ENCODE measurements at regions of chr11 and their contacts with region 1.

Region 1: GRCh38 chr11:33857933-33858371 is 33.9 kb downstream of the LMO2 start:
- DNase-seq: peak; percentile 81
- H3K4me3 Mint-ChIP-seq: no peak overlapping the region
- H3K27ac Mint-ChIP-seq: no peak overlapping the region
- H3K4me1 Mint-ChIP-seq: no peaks in the 10 kb centered on the region
- H3K27me3 Mint-ChIP-seq: peaks cover 37% of the 10 kb centered on the region

Region 2: DNA sequence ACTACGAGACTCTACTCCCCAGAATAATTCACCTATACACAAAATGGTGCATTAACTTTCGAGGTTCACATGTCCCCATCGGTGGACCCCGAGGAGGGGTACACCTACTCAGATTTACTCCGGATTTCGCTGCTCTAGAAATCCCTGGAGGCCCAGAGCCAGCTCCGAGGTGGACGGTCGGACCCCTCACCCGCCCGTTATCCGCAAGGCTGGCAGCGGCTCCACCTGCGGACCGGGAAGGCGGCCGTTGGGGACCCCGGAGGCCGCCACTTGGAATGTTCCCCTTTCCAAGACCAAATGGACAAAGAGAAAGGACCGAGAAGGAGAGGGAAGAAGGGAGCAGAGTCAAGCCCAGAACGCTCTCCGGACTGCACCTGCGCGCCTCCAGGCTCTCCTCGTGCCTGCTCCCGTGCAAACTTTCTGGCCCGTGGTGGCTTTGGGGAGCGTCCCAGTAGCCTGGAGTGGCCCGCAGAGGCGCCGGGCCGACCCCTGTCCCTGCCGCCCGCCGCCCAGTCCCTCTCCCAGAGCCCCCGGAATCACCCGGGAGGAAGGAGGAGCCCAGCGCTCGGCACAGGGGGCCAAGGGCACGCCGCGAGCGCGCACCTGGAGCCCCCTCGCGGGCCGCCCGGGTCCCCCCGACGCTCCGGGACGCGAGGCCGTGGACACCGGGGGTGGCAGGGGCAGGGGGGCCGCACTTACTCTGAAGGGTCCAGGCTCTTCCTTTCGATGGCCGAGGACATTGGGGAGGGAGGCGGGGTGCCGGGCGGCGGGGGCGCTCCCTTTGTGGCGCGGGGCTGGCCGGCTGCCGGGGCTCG is 10.9 kb after region 1 on chr11:
- CTCF ChIA-PET with region 1: interaction called, 25 read pairs
- POLR2A ChIA-PET with region 1: no interaction called
- intact Hi-C with region 1: no loop called
- DNase-seq: no peak
- H3K4me3 Mint-ChIP-seq: no peak overlapping the region
- H3K27ac Mint-ChIP-seq: no peak overlapping the region
- H3K4me1 Mint-ChIP-seq: peaks cover 9% of the 10 kb centered on the region
- H3K27me3 Mint-ChIP-seq: peaks cover 60% of the 10 kb centered on the region

Region 3: GRCh38 chr11:33970984-33971466 is 113.1 kb after region 1 on chr11:
- CTCF ChIA-PET with region 1: interaction called, 27 read pairs
- POLR2A ChIA-PET with region 1: no interaction called
- intact Hi-C with region 1: loop called (anchors 2 kb)
- DNase-seq: peak; percentile 17
- H3K4me3 Mint-ChIP-seq: no peak overlapping the region
- H3K27ac Mint-ChIP-seq: no peak overlapping the region
- H3K4me1 Mint-ChIP-seq: no peaks in the 10 kb centered on the region
- H3K27me3 Mint-ChIP-seq: peaks cover 10% of the 10 kb centered on the region

Region 4: GRCh38 chr11:33977676-33978075 is 119.7 kb after region 1 on chr11:
- CTCF ChIA-PET with region 1: interaction called, 10 read pairs
- POLR2A ChIA-PET with region 1: no interaction called
- intact Hi-C with region 1: no loop called
- DNase-seq: no peak
- H3K4me3 Mint-ChIP-seq: no peak overlapping the region
- H3K27ac Mint-ChIP-seq: no peak overlapping the region
- H3K4me1 Mint-ChIP-seq: no peaks in the 10 kb centered on the region
- H3K27me3 Mint-ChIP-seq: peaks cover 11% of the 10 kb centered on the region

Measured in activated CD4-positive, alpha-beta memory T cell treated with anti-CD3 and anti-CD28 coated beads for 36 hours (primary cell).